Psoas muscle (tissue), 8 donors: ENCODE measurements at regions of chr18 and their contacts with region 1.

Region 1: DNA sequence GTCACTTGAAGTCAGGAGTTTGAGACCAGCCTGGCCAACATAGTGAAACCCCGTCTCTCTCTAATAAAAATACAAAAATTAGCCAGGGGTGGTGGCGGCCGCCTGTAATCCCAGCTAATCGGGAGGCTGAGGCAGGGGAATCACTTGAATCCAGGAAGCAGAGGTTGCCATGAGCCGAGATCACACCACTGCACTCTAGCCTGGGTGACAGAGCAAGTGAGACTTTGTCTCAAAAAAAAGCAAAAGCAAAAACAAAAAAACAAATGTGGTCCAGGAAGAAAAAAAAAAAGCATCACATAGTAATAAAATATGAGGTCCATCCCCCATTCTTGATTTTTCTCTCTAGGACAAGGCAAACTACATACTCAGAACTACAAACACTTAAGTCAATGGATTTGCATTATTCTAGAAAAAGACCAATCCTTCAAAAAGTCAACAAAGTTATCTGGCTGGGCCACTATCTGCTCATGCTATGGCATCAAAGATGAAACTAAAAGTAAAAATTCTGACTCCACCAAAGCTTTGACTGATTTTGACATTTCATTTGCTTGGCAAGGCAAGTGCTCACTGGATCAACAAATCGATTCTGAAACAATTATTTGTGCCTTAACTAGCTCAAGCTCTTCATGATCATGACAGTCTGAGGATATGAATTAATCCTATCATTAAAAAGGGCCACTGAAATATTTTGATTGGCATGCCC is 28.4 kb downstream of the MEX3C start:
- DNase-seq: no peak
- ATAC-seq: no peak
- H3K4me3 ChIP-seq: no peak overlapping the region
- H3K27ac ChIP-seq: no peak overlapping the region
- H3K4me1 ChIP-seq: no peaks in the 10 kb centered on the region
- H3K27me3 ChIP-seq: no peaks in the 10 kb centered on the region
- CTCF ChIP-seq: no peak

Region 2: GRCh38 chr18:51251625-51252024 is 82.5 kb after region 1 on chr18:
- intact Hi-C with region 1: loop called in 1 of 2 experiments (anchors 10 kb)
- DNase-seq: no peak
- ATAC-seq: no peak
- H3K4me3 ChIP-seq: no peak overlapping the region
- H3K27ac ChIP-seq: no peak overlapping the region
- H3K4me1 ChIP-seq: no peaks in the 10 kb centered on the region
- H3K27me3 ChIP-seq: peaks cover 0 to 2% (median 0%) of the 10 kb centered on the region in 3 donors
- CTCF ChIP-seq: no peak